PC-3 (cell line): ENCODE measurements at regions of chr12 and their contacts with region 1.

Region 1: DNA sequence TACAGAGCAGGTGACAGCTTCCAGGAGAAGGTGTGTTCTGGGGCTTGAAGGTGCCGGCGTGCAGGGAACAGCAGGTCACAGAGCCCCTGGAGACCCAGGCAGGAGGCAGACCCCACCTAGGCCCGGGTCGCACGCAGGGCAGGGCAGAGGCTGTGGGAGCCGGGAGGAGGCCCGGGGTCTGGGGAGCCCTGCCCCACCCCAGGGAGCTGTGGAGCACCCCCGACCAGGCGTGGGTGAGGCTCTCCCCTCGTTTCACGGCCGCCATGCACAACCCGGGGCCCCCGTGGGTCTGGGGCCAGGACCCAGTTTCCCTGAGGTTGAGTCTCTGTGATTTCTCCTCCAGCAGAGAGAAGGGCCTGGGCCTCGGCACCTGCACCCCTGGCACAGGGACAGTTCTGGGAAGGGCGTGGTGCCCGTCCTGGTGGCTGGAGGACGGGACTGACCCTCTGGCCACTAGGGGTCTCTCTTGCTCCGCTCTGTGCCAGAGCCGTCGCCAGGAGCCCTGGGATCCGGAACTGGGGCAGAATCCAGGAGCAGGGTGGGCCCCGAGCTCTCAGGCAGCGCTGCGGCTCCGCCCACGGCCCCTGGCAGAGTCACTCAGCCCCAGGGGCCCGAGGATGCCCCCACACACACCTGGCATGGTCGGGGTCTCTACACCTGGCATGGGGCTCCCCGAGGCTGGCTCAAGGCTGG is 75.2 kb upstream of the FBRSL1 start:
- DNase-seq: peak; percentile 94
- ATAC-seq: peak; percentile 96
- H3K4me3 ChIP-seq: peak overlapping the region; percentile 41; the same call in 1 of the 2 replicates
- H3K27ac ChIP-seq: no peak overlapping the region
- H3K4me1 ChIP-seq: no peaks in the 10 kb centered on the region; the same call in 1 of the 2 replicates
- H3K27me3 ChIP-seq: peaks cover 11% of the 10 kb centered on the region
- CTCF ChIP-seq: peak; percentile 96

Region 2: GRCh38 chr12:132153501-132154340 is 261.1 kb before region 1 on chr12:
- CTCF ChIA-PET with region 1: interaction called, 16 read pairs
- POLR2A ChIA-PET with region 1: no interaction called
- intact Hi-C with region 1: loop called (anchors 2 kb)
- DNase-seq: peak; percentile 86
- ATAC-seq: peak; percentile 99
- H3K4me3 ChIP-seq: no peak overlapping the region
- H3K27ac ChIP-seq: no peak overlapping the region
- H3K4me1 ChIP-seq: no peaks in the 10 kb centered on the region
- H3K27me3 ChIP-seq: no peaks in the 10 kb centered on the region
- CTCF ChIP-seq: peak; percentile 97

Region 3: DNA sequence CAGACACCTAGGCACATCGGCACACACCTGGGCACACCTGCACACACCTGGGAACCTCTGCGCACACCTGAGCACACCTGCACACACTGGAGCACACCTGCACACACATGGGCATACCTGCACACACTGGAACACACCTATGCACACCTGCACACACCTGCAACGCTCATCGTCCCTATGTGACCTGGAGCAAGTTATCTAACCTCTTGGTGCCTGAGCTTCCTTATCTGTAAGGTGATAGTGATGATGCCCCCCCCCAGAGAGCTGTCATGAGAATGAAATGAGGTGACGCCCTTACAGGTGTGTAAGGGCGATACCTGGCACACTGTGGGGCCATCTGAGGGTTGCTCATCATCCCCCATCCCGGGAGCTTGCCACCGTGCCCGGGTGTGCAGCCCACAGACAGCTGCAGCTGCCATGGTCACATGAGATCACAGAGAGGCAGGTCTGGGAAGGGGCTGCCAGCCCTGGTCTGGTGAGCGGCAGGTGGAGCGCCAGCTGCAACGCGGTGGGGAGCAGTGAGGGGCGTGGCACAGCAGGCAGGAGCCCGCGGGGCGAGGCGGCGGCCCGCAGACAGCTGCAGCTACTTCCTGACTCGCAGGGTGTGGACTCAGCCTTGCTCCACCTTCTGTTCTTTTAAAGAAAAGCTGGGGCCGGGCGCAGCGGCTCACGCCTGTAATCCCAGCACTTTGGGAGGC is 15.3 kb after region 1 on chr12:
- CTCF ChIA-PET with region 1: interaction called, 14 read pairs
- POLR2A ChIA-PET with region 1: interaction called, 3 read pairs
- intact Hi-C with region 1: no loop called
- DNase-seq: peak; percentile 67
- ATAC-seq: peak; percentile 79
- H3K4me3 ChIP-seq: peak overlapping the region; percentile 33; the same call in 1 of the 2 replicates
- H3K27ac ChIP-seq: no peak overlapping the region
- H3K4me1 ChIP-seq: peaks cover 16% of the 10 kb centered on the region
- H3K27me3 ChIP-seq: no peaks in the 10 kb centered on the region
- CTCF ChIP-seq: no peak

Region 4: DNA sequence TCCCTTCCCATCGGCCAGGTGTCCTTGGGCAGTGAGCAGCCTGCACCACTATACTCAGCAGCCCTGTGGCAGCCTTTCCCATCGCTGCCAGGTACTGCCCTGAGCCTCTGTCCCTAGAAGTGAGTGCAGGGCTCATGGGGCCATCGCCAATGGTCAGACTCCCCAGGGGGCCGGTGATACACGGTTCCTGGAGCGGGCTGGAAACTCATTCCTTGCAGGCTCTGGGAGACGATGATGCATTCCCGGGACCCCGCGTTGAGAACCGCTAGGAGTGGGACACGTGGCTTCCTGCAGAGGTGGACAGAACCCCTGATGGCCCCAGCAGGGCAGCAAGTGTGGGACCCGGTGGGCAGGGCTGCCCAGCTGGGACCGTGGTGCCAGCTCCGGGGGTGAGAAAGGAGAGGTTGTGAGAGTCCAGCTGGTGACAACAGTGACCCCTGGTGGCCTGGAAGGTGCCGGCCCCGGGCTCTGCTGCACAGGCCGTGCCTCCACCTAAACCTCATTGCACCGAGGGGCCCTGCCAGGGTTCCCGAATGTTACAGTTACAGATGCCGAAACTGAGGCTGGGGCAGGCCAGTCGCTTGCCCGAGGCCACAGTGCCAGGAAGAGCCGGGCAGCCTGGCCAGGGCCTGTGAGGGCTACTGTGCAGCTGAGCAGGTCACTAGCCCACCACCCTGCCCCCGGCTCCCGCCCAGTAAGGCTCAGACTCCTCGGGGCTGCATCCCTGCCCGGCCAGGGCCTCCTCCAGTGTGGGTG is 109.0 kb after region 1 on chr12:
- CTCF ChIA-PET with region 1: no interaction called
- POLR2A ChIA-PET with region 1: interaction called, 13 read pairs
- intact Hi-C with region 1: loop called (anchors 1 kb)
- DNase-seq: peak; percentile 66
- ATAC-seq: peak; percentile 65
- H3K4me3 ChIP-seq: peak overlapping the region; percentile 19; the same call in 1 of the 2 replicates
- H3K27ac ChIP-seq: peak overlapping the region; percentile 33
- H3K4me1 ChIP-seq: peaks cover 21% of the 10 kb centered on the region
- H3K27me3 ChIP-seq: no peaks in the 10 kb centered on the region
- CTCF ChIP-seq: peak; percentile 92

Region 5: GRCh38 chr12:132560614-132561426 is 146.0 kb after region 1 on chr12:
- CTCF ChIA-PET with region 1: interaction called, 3 read pairs
- POLR2A ChIA-PET with region 1: interaction called, 3 read pairs
- intact Hi-C with region 1: loop called (anchors 1 kb)
- DNase-seq: peak; percentile 80
- ATAC-seq: peak; percentile 53
- H3K4me3 ChIP-seq: peak overlapping the region; percentile 96
- H3K27ac ChIP-seq: peak overlapping the region; percentile 46
- H3K4me1 ChIP-seq: 0 out of 2 replicates have a peak, but pooled peaks cover 4% of the 10 kb centered on the region
- H3K27me3 ChIP-seq: no peaks in the 10 kb centered on the region
- CTCF ChIP-seq: peak; percentile 96

Region 6: GRCh38 chr12:132614861-132615578 is 200.2 kb after region 1 on chr12:
- CTCF ChIA-PET with region 1: interaction called, 7 read pairs
- POLR2A ChIA-PET with region 1: no interaction called
- intact Hi-C with region 1: loop called (anchors 1 kb)
- DNase-seq: peak; percentile 90
- ATAC-seq: peak; percentile 97
- H3K4me3 ChIP-seq: no peak overlapping the region
- H3K27ac ChIP-seq: no peak overlapping the region
- H3K4me1 ChIP-seq: no peaks in the 10 kb centered on the region
- H3K27me3 ChIP-seq: peaks cover 38% of the 10 kb centered on the region
- CTCF ChIP-seq: peak; percentile 97